Mammary epithelial cell (primary cell): ENCODE measurements at regions of chr11 and their contacts with region 1.

Region 1: DNA sequence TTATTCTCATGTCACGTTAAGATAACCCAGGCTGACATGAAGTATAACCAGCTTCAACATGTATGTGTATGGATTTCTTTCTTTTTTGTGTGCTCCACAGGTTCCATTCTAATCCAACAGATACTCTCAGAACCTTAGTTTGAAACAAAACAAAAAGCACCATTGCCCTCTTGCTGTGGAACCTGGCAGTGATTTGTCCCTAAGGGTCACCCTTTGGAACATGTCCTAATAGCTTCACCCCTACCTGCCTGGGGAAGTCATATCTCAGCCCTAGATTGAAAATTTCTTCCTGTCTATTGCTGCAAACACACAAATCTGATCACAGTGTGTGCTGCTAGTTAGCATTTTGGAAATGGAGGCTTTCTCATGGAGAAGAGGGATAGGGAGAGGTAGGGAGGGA is 11.4 kb upstream of the CADM1 start:
- DNase-seq: no peak
- H3K4me3 ChIP-seq: no peak overlapping the region
- H3K27ac ChIP-seq: no peak overlapping the region
- H3K4me1 ChIP-seq: no peaks in the 10 kb centered on the region
- H3K27me3 ChIP-seq: no peaks in the 10 kb centered on the region
- CTCF ChIP-seq: no peak

Region 2: GRCh38 chr11:116742104-116742503 is 1226.5 kb after region 1 on chr11:
- CTCF ChIA-PET with region 1: interaction called, 10 read pairs
- dilution Hi-C with region 1: no loop called
- in situ Hi-C with region 1: no loop called
- intact Hi-C with region 1: no loop called
- DNase-seq: no peak
- H3K4me3 ChIP-seq: no peak overlapping the region
- H3K27ac ChIP-seq: no peak overlapping the region
- H3K4me1 ChIP-seq: no peaks in the 10 kb centered on the region
- H3K27me3 ChIP-seq: no peaks in the 10 kb centered on the region
- CTCF ChIP-seq: no peak